ENCODE measurements at regions of chr2 and their contacts with region 1.

Region 1: DNA sequence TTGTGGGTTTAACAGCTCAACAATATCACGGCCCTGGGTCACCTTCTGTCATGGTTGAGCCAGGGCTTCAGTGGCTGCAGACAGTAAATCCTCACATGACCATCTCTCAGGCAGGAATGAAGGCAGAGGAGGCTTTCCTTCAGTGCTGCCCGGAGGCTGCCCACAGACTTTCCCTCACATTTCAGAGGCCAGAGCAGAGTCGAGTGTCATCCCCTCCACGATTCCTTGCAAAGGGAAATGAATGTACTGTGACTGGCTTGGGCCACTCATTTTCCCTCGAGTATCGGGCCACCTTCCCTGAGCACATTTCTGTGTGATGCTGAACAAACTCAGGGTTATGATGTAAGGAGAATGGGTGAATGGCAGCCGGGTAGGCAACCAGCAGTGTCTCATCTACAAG is 10.0 kb upstream of the REEP1 start:
- DNase-seq: no peak
- H3K4me3 Mint-ChIP-seq: no peak overlapping the region
- H3K27ac Mint-ChIP-seq: no peak overlapping the region
- H3K4me1 Mint-ChIP-seq: no peaks in the 10 kb centered on the region
- H3K27me3 Mint-ChIP-seq: peaks cover 18% of the 10 kb centered on the region

Region 2: DNA sequence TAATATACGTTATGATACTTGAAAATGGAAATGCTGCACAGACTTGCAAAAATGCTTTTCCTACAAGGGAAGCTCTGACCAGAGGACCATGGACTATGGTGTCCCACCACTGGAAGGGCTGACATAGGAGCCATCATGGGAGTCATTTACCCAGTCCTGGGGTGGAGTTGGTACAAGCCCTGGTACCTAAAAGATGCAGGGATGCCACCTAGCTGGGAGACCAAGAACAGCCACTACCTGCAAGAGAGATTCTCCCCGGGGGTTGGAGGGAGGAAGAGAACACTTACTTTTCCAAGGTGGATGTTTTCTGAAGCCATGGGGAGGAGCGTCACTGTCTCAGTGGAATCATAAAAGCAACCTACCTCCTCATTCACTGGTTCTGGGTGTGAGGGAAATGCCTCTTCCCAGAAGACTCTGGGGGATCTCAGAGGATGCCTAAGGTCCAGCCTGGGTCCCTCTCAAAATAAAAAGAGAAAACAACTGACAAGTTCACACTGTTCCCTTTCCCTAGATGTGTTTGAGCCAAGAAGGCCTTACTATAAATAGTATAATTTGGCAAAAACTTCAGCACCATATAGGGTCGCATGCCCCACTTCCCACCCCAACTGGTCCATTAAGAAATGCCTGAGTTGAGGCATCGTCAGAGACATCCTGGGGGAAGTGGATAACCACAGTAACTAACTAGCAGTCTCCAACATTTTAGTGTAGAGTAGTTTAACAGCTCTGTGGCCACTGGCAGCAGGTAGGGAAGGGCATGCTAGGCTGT is 49.8 kb before region 1 on chr2:
- intact Hi-C with region 1: loop called (anchors 5 kb)
- DNase-seq: no peak
- H3K4me3 Mint-ChIP-seq: no peak overlapping the region
- H3K27ac Mint-ChIP-seq: no peak overlapping the region
- H3K4me1 Mint-ChIP-seq: no peaks in the 10 kb centered on the region
- H3K27me3 Mint-ChIP-seq: peaks cover 22% of the 10 kb centered on the region

Region 3: GRCh38 chr2:86695053-86695691 is 347.8 kb after region 1 on chr2:
- intact Hi-C with region 1: no loop called
- DNase-seq: no peak
- H3K4me3 Mint-ChIP-seq: no peak overlapping the region
- H3K27ac Mint-ChIP-seq: no peak overlapping the region
- H3K4me1 Mint-ChIP-seq: peaks cover 10% of the 10 kb centered on the region
- H3K27me3 Mint-ChIP-seq: no peaks in the 10 kb centered on the region